Astrocyte of the cerebellum (primary cell): ENCODE measurements at regions of chr10 and their contacts with region 1.

Region 1: GRCh38 chr10:6191147-6191546 is 11.6 kb upstream of the PFKFB3 start:
- DNase-seq: no peak
- H3K4me3 ChIP-seq: no peak overlapping the region
- CTCF ChIP-seq: no peak

Region 2: GRCh38 chr10:6144406-6145165 is 46.6 kb before region 1 on chr10:
- in situ Hi-C with region 1: loop called (anchors 5 kb)
- DNase-seq: peak; percentile 37
- H3K4me3 ChIP-seq: peak overlapping the region; percentile 67
- CTCF ChIP-seq: no peak